ENCODE measurements at regions of chr20 and their contacts with region 1.

Region 1: DNA sequence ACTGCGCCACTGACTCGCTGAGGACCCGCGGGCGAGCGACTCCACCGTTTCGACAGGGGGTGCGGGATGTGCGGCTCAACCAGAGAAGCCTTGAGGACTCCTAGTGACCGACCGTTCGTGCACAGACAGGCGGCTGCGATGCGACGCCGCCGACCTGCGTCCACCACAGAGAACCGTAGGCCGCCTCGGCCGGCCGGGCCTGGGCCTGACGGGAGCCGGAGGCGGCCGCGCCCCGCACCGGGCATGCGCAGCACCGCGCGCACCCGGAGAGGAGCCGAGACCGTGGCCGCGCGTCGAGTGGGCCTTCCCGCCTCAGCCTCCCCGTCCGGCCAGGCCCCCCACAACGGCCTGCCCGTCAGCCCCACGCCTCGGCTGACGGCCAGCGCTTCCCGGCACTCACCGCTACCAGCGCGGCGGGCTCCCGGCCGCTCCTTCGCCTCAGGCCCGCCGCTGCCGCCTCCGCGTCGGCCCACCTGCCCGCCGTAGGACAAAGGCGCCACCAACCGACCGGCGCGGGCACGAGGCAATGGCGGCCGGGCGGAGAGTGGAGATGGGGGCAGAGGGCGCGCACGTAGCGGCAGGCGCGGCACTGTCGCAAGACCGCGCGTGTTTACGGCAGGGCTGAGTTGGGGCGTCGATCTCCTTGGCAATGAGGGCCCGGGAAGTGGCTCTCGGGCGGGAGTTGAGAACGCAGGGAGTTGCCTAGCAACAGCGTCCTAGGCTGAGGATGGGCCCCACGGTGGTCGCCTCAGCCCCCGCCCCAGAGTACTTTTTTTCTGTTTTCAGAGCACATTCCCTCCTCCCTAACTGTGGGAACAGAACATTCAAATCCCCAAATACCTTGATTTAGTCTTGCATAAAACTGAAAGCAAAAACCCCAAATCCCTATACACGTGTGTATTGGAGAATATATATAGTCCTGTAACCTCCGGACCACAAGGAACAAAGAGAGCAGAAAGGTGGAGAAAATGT is at the start of gene NCOA5:
- DNase-seq: peak; percentile 91
- H3K4me3 Mint-ChIP-seq: peak within 1 kb of the TSS; percentile 92
- H3K27ac Mint-ChIP-seq: peak within 1 kb of the TSS; percentile 94
- H3K4me1 Mint-ChIP-seq: peaks cover 48% of the 10 kb centered on the region
- H3K27me3 Mint-ChIP-seq: peaks cover 4% of the 10 kb centered on the region
- total RNA-seq, gene NCOA5: 30.4 and 32.9 TPM in 2 replicates

Region 2: GRCh38 chr20:45235995-45236394 is 853.7 kb before region 1 on chr20:
- intact Hi-C with region 1: no loop called
- DNase-seq: no peak
- H3K4me3 Mint-ChIP-seq: no peak overlapping the region
- H3K27ac Mint-ChIP-seq: no peak overlapping the region
- H3K4me1 Mint-ChIP-seq: no peaks in the 10 kb centered on the region
- H3K27me3 Mint-ChIP-seq: peaks cover 27% of the 10 kb centered on the region

Region 3: DNA sequence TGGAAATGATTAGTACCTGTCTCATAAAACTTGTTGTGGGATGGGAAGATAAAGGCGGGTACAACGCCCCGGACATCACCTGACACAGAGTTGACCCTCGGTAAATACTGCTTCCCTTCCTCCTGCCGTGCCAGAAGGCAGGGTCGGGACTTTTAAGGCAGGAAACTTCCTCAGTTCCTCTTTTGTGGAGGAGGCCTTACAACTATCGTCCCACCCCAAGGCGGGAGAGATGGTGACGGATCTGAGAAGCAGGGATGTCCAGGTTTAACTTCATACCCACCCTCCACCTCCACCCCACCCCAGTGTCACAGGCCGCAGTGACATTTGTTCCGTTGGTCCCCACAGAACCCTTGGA is 297.4 kb before region 1 on chr20:
- intact Hi-C with region 1: loop called (anchors 5 kb)
- DNase-seq: no peak
- H3K4me3 Mint-ChIP-seq: peak overlapping the region; percentile 82
- H3K27ac Mint-ChIP-seq: peak overlapping the region; percentile 89
- H3K4me1 Mint-ChIP-seq: peaks cover 24% of the 10 kb centered on the region
- H3K27me3 Mint-ChIP-seq: peaks cover 3% of the 10 kb centered on the region

Region 4: GRCh38 chr20:46063652-46064054 is 26.1 kb before region 1 on chr20:
- intact Hi-C with region 1: loop called (anchors 1 kb)
- DNase-seq: peak; percentile 17
- H3K4me3 Mint-ChIP-seq: peak overlapping the region; percentile 58
- H3K27ac Mint-ChIP-seq: peak overlapping the region; percentile 93
- H3K4me1 Mint-ChIP-seq: peaks cover 59% of the 10 kb centered on the region
- H3K27me3 Mint-ChIP-seq: peaks cover 5% of the 10 kb centered on the region

Region 5: GRCh38 chr20:46562373-46563169 is 472.9 kb after region 1 on chr20:
- intact Hi-C with region 1: loop called (anchors 10 kb)
- DNase-seq: peak; percentile 53
- H3K4me3 Mint-ChIP-seq: no peak overlapping the region
- H3K27ac Mint-ChIP-seq: no peak overlapping the region
- H3K4me1 Mint-ChIP-seq: peaks cover 36% of the 10 kb centered on the region
- H3K27me3 Mint-ChIP-seq: peaks cover 6% of the 10 kb centered on the region

Measured in activated T-helper 1 cell treated with anti-CD3 and anti-CD28 coated beads, Interleukin-12 subunit alpha, Interleukin-12 subunit beta, Interleukin-2, Interleukin-4 antibody, amounts not matched to agents 30 ng/mL and 10 ng/mL and 1 ng/mL, durations not matched to agents 14 hours and 24 hours and 36 hours (primary cell).